Activated naive CD4-positive, alpha-beta T cell treated with anti-CD3 and anti-CD28 coated beads for 36 hours (primary cell): ENCODE measurements at regions of chr10 and their contacts with region 1.

Region 1: DNA sequence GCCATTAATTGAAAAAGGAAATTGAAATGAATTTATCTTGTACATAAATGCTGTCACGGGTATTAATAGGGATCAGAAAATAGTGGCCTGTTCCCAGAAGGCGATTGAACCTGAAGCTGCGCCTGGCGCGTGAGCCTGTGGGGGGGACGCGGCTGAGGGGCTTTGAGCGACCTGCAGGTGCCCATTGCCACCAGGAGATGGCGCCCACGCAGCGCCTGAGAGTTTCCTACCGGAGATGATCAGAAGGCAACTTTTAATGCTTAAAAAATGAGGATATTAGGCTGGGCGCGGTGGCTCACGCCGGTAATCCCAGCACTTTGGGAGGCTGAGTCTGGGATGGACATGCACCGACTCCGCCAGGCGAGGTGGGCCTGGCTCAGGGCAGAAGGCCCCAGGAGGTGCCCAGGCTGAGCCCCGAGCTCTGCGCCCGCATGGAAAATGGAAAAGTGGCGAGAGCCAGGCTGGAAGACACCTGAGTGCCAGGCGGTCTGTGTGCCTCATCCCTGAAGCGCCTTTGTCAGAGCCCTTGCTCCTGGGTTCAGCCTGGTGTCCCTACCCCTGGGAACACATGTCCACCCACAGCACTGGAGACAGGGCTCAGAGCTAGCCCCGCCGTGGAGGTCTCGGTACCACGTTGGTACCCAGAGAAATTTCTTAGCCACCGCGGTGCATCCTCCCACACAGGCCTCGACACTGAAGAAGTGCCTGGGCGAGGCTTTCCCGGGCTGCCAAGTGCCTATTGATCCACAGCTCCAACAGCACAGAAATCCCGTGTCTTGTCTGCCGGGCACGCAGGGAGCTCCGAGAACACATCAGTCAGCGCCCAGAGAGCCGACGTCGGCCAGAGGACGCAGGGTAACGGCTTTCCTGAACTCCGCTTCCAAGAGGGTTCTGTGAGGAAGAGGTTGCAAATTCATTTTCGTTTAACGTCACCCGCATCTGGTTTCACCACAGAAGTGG is 117.4 kb downstream of the INPP5A start:
- DNase-seq: peak; percentile 63
- H3K4me3 Mint-ChIP-seq: no peak overlapping the region
- H3K27ac Mint-ChIP-seq: no peak overlapping the region
- H3K4me1 Mint-ChIP-seq: peaks cover 1% of the 10 kb centered on the region
- H3K27me3 Mint-ChIP-seq: no peaks in the 10 kb centered on the region

Region 2: DNA sequence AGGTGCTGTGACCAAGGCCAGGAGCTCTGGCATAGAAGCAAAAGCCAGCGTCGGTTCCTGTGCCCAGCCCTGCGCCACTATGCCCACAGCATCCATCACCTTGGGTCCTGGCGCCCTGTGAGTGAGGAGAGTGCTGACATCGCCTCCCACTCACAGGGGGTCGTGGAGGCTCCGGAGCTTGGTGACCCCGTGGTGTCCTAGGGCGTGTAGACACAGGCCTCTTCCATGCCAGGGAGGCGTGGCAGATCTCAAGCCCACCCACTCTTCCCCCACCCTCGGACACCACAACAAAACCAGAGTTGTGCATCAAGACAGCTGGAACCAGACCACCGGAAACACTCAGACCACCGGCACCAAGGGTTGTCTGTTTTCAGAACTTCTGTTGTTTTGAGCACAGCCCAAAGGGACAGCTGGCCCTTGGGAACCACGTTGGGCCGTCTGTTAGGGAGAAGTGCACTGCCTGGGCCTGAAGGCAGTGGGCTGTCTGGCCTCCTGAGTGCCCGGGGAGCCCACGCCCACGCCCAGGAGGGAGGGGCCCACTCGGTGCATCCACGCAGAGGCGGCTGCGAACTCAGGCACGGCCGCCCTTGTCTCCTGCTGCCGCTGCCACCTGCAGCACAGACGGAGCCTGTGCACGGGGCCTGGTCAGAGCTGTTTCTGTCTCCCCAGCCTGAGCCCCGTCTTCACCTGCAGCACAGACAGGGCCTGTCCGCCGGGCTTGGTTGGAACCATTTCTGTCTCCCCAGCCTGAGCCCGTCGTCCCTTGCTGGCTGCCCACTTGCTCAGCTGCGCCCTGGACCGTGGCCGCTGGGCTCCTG is 11.1 kb before region 1 on chr10:
- CTCF ChIA-PET with region 1: interaction called, 12 read pairs
- intact Hi-C with region 1: no loop called
- DNase-seq: no peak
- H3K4me3 Mint-ChIP-seq: no peak overlapping the region
- H3K27ac Mint-ChIP-seq: no peak overlapping the region
- H3K4me1 Mint-ChIP-seq: no peaks in the 10 kb centered on the region
- H3K27me3 Mint-ChIP-seq: no peaks in the 10 kb centered on the region

Region 3: GRCh38 chr10:132788180-132788830 is 133.3 kb after region 1 on chr10:
- CTCF ChIA-PET with region 1: interaction called, 3 read pairs
- intact Hi-C with region 1: loop called (anchors 1 kb)
- DNase-seq: peak; percentile 23
- H3K4me3 Mint-ChIP-seq: no peak overlapping the region
- H3K27ac Mint-ChIP-seq: no peak overlapping the region
- H3K4me1 Mint-ChIP-seq: no peaks in the 10 kb centered on the region
- H3K27me3 Mint-ChIP-seq: peaks cover 23% of the 10 kb centered on the region